ENCODE measurements at regions of chr20 and their contacts with region 1.

Region 1: GRCh38 chr20:5090191-5090590 is 29.6 kb downstream of the PCNA start:
- DNase-seq: peak in 2 of 5 donors; percentile 31 to 33
- ATAC-seq: peak in 3 of 4 donors; percentile 63 to 90 (median 70)
- H3K4me3 ChIP-seq: no peak overlapping the region
- H3K27ac ChIP-seq: peak overlapping the region in 8 of 12 donors; percentile 32 to 89 (median 46)
- H3K4me1 ChIP-seq: peaks cover 0 to 37% (median 0%) of the 10 kb centered on the region in 12 donors
- H3K27me3 ChIP-seq: no peaks in the 10 kb centered on the region
- CTCF ChIP-seq: no peak
- POLR2A ChIP-seq: peak in 1 of 2 donors; percentile 23

Region 2: GRCh38 chr20:4961746-4962145 is 128.4 kb before region 1 on chr20:
- intact Hi-C with region 1: loop called in 4 of 10 experiments (anchors 10 kb)
- DNase-seq: peak in 2 of 5 donors; percentile 12 to 22
- ATAC-seq: peak; percentile 37 to 94 (median 86)
- H3K4me3 ChIP-seq: no peak overlapping the region
- H3K27ac ChIP-seq: peak overlapping the region in 3 of 12 donors; percentile 2 to 31 (median 11)
- H3K4me1 ChIP-seq: peaks cover 0 to 23% (median 8%) of the 10 kb centered on the region in 12 donors
- H3K27me3 ChIP-seq: no peaks in the 10 kb centered on the region
- CTCF ChIP-seq: no peak
- POLR2A ChIP-seq: no peak

Region 3: DNA sequence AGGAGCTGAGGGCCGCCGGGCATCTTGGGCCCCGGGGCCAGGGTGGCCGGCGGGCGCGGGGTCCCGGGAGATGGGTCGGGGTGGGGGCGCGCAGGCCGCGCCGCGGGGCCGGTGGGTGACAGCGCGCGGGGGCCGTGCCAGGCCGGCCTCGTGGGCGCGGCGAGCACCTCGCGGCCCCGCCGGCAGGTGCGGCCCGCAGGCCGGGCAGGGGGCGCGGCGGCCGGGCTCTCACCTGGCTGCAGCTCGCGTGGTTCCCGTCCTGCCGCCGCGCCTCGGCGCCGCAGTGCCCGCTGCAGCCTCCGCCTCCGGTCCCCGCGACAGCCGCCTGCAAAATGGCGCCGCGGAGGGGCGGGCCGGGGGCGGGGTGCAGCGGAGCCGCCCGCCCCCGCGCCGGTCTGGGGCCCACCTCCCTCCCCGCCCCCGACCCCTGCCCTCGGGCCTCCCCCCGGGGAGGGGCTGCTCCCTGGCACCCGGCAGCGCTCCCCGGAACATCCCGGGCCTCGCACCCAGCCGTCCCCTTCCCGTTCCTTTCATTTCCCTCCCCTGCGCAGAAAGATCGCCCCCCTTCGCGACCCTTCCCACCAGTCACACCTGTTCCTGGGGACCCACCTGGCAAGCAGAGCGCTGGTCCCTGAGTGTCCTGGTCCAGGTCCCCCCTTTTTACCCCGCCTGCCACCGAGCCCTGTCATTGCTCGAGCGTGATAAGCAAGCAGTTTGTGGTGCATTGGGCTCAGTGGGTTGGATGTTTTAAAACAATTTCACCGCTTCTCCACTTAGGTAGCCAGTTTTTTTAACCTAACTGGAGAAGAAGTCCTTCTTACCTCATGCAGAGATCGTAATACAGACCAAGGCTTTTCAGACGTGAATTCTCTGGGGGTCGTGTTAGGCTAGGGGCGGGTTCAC is 88.8 kb before region 1 on chr20 and contains the start of gene SLC23A2:
- intact Hi-C with region 1: loop called in 1 of 10 experiments (anchors 10 kb)
- DNase-seq: peak; percentile 37 to 70 (median 58)
- ATAC-seq: peak; percentile 25 to 88 (median 76)
- H3K4me3 ChIP-seq: peak within 1 kb of the TSS; percentile 69 to 97 (median 92)
- H3K27ac ChIP-seq: peak within 1 kb of the TSS in 5 of 12 donors; percentile 18 to 60 (median 52)
- H3K4me1 ChIP-seq: peaks cover 0 to 31% (median 10%) of the 10 kb centered on the region in 12 donors
- H3K27me3 ChIP-seq: no peaks in the 10 kb centered on the region
- CTCF ChIP-seq: no peak
- POLR2A ChIP-seq: no peak
- total RNA-seq, gene SLC23A2: 5.0 to 18.7 (median 8.4) TPM

Region 4: GRCh38 chr20:5234158-5234557 is 144.0 kb after region 1 on chr20:
- intact Hi-C with region 1: no loop called
- DNase-seq: no peak
- ATAC-seq: no peak
- H3K4me3 ChIP-seq: no peak overlapping the region
- H3K27ac ChIP-seq: no peak overlapping the region
- H3K4me1 ChIP-seq: no peaks in the 10 kb centered on the region
- H3K27me3 ChIP-seq: no peaks in the 10 kb centered on the region
- CTCF ChIP-seq: no peak
- POLR2A ChIP-seq: no peak